Right ventricle myocardium inferior (tissue), 1 donor: ENCODE measurements at regions of chr22 and their contacts with region 1.

Region 1: GRCh38 chr22:24994070-24994763 is 41.7 kb downstream of the KIAA1671 start:
- DNase-seq: no peak
- ATAC-seq: no peak

Region 2: GRCh38 chr22:25027959-25028840 is 34.0 kb after region 1 on chr22:
- intact Hi-C with region 1: loop called (anchors 5 kb)
- DNase-seq: no peak
- ATAC-seq: no peak